H1 (cell line): ENCODE measurements at regions of chr19 and their contacts with region 1.

Region 1: DNA sequence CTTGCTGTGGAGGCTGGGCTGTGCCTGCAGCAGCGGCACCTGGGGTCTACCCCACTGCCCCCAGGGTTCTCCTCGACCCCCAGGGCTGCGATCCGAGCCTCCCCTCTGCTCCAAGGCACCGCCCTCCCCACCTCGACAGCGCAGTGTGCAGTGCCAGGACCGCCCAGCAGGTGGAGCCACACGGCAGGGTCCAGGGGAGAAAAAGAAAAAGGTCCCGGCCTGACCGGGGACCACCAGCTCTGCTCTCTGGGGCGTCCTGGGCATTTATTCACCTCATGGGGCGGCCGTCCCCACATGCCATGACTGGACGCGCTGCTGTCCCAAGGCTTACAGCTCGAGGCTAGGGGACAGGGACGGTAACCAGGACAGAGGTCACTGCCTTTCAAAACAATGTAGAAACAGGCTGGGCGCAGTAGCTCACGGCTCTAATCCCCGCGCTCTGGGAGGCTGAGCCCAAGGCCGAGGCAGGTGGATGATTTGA is 10.6 kb downstream of the REXO1 start:
- DNase-seq: peak in 1 of 2 experiments; percentile 98
- H3K4me3 ChIP-seq: no peak overlapping the region
- H3K27ac ChIP-seq: no peak overlapping the region
- H3K4me1 ChIP-seq: 0 out of 7 replicates have a peak, but pooled peaks cover 0 to 2% (median 0%) of the 10 kb centered on the region in 4 experiments
- H3K27me3 ChIP-seq: no peaks in the 10 kb centered on the region
- CTCF ChIP-seq: peak; percentile 89 to 94 (median 91)
- EP300 ChIP-seq: no peak
- POLR2A ChIP-seq: no peak
- RAD21 ChIP-seq: peak; percentile 41 to 62; a peak in 3 of 4 replicates

Region 2: GRCh38 chr19:1812469-1813196 is 25.0 kb before region 1 on chr19:
- CTCF ChIA-PET with region 1: interaction called, 228 read pairs
- POLR2A ChIA-PET with region 1: interaction called, 3 read pairs
- DNase-seq: peak; percentile 93 to 95
- H3K4me3 ChIP-seq: peak overlapping the region; percentile 49 to 69 (median 56)
- H3K27ac ChIP-seq: no peak overlapping the region; the same call in 1 of the 2 replicates
- H3K4me1 ChIP-seq: peaks cover 0 to 2% (median 0%) of the 10 kb centered on the region in 4 experiments; a peak in 3 of 7 replicates
- H3K27me3 ChIP-seq: peaks cover 0 to 3% (median 0%) of the 10 kb centered on the region in 4 experiments; a peak in 3 of 7 replicates
- CTCF ChIP-seq: peak; percentile 80 to 93 (median 84)
- EP300 ChIP-seq: no peak
- POLR2A ChIP-seq: peak in 1 of 2 experiments; percentile 9; a peak in 1 of 3 replicates
- RAD21 ChIP-seq: peak; percentile 86 to 88

Region 3: GRCh38 chr19:1848399-1849131 is 10.9 kb after region 1 on chr19 and contains the start of gene REXO1:
- CTCF ChIA-PET with region 1: interaction called, 228 read pairs
- POLR2A ChIA-PET with region 1: interaction called, 10 read pairs
- DNase-seq: peak; percentile 84 to 99
- H3K4me3 ChIP-seq: peak within 1 kb of the TSS; percentile 75 to 95 (median 88)
- H3K27ac ChIP-seq: peak within 1 kb of the TSS; percentile 100
- H3K4me1 ChIP-seq: peaks cover 0 to 17% (median 13%) of the 10 kb centered on the region in 4 experiments; a peak in 6 of 7 replicates
- H3K27me3 ChIP-seq: no peaks in the 10 kb centered on the region
- CTCF ChIP-seq: peak; percentile 80 to 89 (median 84)
- EP300 ChIP-seq: peak in 1 of 2 experiments; percentile 6; a peak in 1 of 3 replicates
- POLR2A ChIP-seq: peak in 1 of 2 experiments; percentile 92; a peak in 2 of 3 replicates
- RAD21 ChIP-seq: peak; percentile 23 to 35; a peak in 2 of 4 replicates
- total RNA-seq, gene REXO1: 42.4 and 44.3 TPM in 2 replicates

Region 4: GRCh38 chr19:1855040-1855827 is 17.6 kb after region 1 on chr19:
- CTCF ChIA-PET with region 1: interaction called, 18 read pairs
- POLR2A ChIA-PET with region 1: interaction called, 7 read pairs
- DNase-seq: peak; percentile 71 to 89
- H3K4me3 ChIP-seq: peak overlapping the region in 2 of 4 experiments; percentile 7 to 70; a peak in 2 of 8 replicates
- H3K27ac ChIP-seq: peak overlapping the region; percentile 58
- H3K4me1 ChIP-seq: peaks cover 0 to 61% (median 51%) of the 10 kb centered on the region in 4 experiments; a peak in 6 of 7 replicates
- H3K27me3 ChIP-seq: no peaks in the 10 kb centered on the region
- CTCF ChIP-seq: no peak
- EP300 ChIP-seq: no peak
- POLR2A ChIP-seq: 0 out of 3 replicates have a peak, but pooled peaks of 1 of the 2 experiments have one; percentile 34
- RAD21 ChIP-seq: no peak